ENCODE measurements at regions of chr2 and their contacts with region 1.

Region 1: GRCh38 chr2:216108967-216109921 is at the start of gene XRCC5:
- DNase-seq: peak; percentile 93
- H3K4me3 ChIP-seq: peak within 1 kb of the TSS; percentile 83 to 97
- H3K27ac ChIP-seq: peak within 1 kb of the TSS; percentile 89 to 96
- H3K4me1 ChIP-seq: peaks cover 9 to 23% of the 10 kb centered on the region in 2 experiments
- H3K27me3 ChIP-seq: no peaks in the 10 kb centered on the region
- CTCF ChIP-seq: no peak
- EP300 ChIP-seq: peak in 1 of 2 experiments; percentile 39; a peak in 1 of 4 replicates
- RAD21 ChIP-seq: no peak
- polyA plus RNA-seq, gene XRCC5: 125 and 167 TPM in 2 replicates

Region 2: GRCh38 chr2:216081487-216082116 is 27.6 kb before region 1 on chr2 and contains the starts of genes PECR and TMEM169:
- CTCF ChIA-PET with region 1: interaction called, 14 read pairs
- POLR2A ChIA-PET with region 1: interaction called, 17 read pairs
- DNase-seq: peak; percentile 97
- H3K4me3 ChIP-seq: peak within 1 kb of the TSS; percentile 72 to 97
- H3K27ac ChIP-seq: peak within 1 kb of the TSS; percentile 28 to 88; a peak in 3 of 4 replicates
- H3K4me1 ChIP-seq: peaks cover 0 to 18% of the 10 kb centered on the region in 2 experiments; a peak in 3 of 4 replicates
- H3K27me3 ChIP-seq: no peaks in the 10 kb centered on the region
- CTCF ChIP-seq: no peak
- EP300 ChIP-seq: no peak; a peak in 1 of 4 replicates
- RAD21 ChIP-seq: no peak
- polyA plus RNA-seq, gene PECR: 18.6 and 20.9 TPM in 2 replicates
- polyA plus RNA-seq, gene TMEM169: 0.30 and 0.47 TPM in 2 replicates

Region 3: GRCh38 chr2:216090369-216090786 is 18.9 kb before region 1 on chr2:
- CTCF ChIA-PET with region 1: interaction called, 13 read pairs
- POLR2A ChIA-PET with region 1: no interaction called
- DNase-seq: no peak
- H3K4me3 ChIP-seq: no peak overlapping the region
- H3K27ac ChIP-seq: peak overlapping the region in 1 of 2 experiments; percentile 30; a peak in 2 of 4 replicates
- H3K4me1 ChIP-seq: no peaks in the 10 kb centered on the region
- H3K27me3 ChIP-seq: no peaks in the 10 kb centered on the region
- CTCF ChIP-seq: no peak
- EP300 ChIP-seq: no peak
- RAD21 ChIP-seq: no peak